ENCODE measurements at regions of chr11 and their contacts with region 1.

Region 1: GRCh38 chr11:119567688-119568582 is 145.0 kb upstream of the THY1 start:
- DNase-seq: no peak
- ATAC-seq: no peak
- H3K4me3 ChIP-seq: no peak overlapping the region
- H3K27ac ChIP-seq: no peak overlapping the region
- H3K4me1 ChIP-seq: no peaks in the 10 kb centered on the region
- H3K27me3 ChIP-seq: no peaks in the 10 kb centered on the region
- CTCF ChIP-seq: no peak

Region 2: GRCh38 chr11:119249671-119250010 is 318.3 kb before region 1 on chr11:
- CTCF ChIA-PET with region 1: no interaction called
- POLR2A ChIA-PET with region 1: no interaction called
- in situ Hi-C with region 1: no loop called
- intact Hi-C with region 1: no loop called
- DNase-seq: no peak
- ATAC-seq: no peak
- H3K4me3 ChIP-seq: no peak overlapping the region
- H3K27ac ChIP-seq: no peak overlapping the region
- H3K4me1 ChIP-seq: no peaks in the 10 kb centered on the region
- H3K27me3 ChIP-seq: no peaks in the 10 kb centered on the region
- CTCF ChIP-seq: no peak

Region 3: DNA sequence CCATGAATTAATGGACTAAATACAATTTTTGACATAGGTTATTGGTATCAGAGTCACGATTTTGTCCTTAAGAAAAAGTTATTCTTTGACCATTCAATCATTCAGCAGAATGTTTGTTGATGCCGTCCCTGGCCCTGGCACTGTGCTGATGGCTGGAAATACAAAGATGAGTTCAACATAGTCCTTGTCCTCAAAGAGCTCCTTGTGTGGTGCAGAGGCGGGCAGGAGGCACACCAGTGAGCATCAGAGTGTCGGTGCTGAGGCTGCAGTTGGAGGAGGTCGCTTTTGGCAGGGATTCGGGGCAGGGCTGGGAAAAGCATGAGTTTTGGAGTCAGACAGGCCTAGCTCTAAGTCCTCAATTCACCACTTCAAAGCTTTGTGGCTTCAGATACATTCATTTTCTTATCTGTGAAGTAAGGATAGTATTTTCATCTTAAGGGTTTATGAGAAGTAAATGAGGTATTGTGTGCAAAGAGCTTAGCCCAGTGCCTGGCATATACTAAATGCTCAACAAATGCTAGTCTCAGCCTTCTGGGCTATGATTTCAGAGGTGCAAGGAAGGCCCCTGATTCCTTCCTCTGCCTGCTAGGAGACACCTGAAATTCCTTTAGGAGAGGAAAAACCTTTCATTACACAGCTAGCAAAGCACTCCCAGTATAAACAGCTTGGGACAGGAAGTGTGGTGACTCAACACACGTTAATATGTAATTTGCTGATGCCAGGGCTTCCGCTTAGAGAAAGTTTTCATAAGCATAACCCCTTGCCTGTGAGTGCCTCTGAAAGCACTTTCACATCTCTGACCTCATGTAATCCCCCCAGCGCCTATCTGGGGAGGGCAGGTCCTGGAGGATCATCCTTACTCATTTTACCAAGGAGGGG is 47.3 kb after region 1 on chr11:
- CTCF ChIA-PET with region 1: no interaction called
- POLR2A ChIA-PET with region 1: interaction called, 10 read pairs
- in situ Hi-C with region 1: loop called (anchors 5 kb)
- intact Hi-C with region 1: no loop called
- DNase-seq: peak; percentile 30
- ATAC-seq: peak; percentile 80
- H3K4me3 ChIP-seq: no peak overlapping the region
- H3K27ac ChIP-seq: no peak overlapping the region
- H3K4me1 ChIP-seq: no peaks in the 10 kb centered on the region
- H3K27me3 ChIP-seq: no peaks in the 10 kb centered on the region
- CTCF ChIP-seq: no peak

Measured in Panc1 (cell line).